A673 (cell line): ENCODE measurements at regions of chr3 and their contacts with region 1.

Region 1: DNA sequence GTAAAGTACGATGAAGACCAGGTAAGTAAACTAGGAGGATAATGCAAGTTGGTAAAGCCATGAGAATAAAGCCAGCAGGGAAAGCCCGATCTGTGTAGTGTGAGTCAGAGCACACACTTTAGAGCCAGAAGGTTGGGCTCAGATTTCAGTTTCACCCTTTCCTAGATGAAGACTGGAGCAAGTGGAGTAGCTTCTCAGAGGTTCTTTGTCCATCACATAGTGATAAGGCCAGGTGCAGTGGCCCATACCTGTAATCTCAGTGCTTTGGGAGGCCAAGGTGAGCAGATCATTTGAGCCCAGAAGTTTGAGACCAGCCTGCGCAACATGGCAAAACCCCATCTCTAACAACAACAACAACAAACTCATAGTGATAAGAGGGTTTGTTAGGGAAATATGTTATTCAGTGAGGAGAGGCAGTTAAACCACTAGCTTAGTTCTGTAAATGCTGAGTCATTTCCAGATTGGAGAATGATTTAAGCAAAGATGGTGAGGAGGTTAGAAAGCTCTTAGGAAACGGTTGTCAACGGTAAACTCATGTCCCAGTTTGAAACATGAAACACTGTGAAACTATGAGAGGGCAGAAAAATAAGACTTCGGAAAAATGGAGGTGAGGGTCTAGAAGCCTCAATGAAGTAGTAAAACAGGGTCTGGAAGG is 39.0 kb downstream of the IL12A start:
- DNase-seq: no peak
- H3K4me3 ChIP-seq: no peak overlapping the region
- H3K27ac ChIP-seq: no peak overlapping the region
- H3K4me1 ChIP-seq: no peaks in the 10 kb centered on the region
- H3K27me3 ChIP-seq: no peaks in the 10 kb centered on the region
- CTCF ChIP-seq: no peak

Region 2: GRCh38 chr3:160163229-160163878 is 135.7 kb after region 1 on chr3:
- CTCF ChIA-PET with region 1: interaction called, 6 read pairs
- POLR2A ChIA-PET with region 1: no interaction called
- intact Hi-C with region 1: loop called (anchors 5 kb)
- DNase-seq: peak; percentile 48
- H3K4me3 ChIP-seq: no peak overlapping the region
- H3K27ac ChIP-seq: no peak overlapping the region
- H3K4me1 ChIP-seq: no peaks in the 10 kb centered on the region
- H3K27me3 ChIP-seq: peaks cover 4% of the 10 kb centered on the region
- CTCF ChIP-seq: peak; percentile 64

Region 3: DNA sequence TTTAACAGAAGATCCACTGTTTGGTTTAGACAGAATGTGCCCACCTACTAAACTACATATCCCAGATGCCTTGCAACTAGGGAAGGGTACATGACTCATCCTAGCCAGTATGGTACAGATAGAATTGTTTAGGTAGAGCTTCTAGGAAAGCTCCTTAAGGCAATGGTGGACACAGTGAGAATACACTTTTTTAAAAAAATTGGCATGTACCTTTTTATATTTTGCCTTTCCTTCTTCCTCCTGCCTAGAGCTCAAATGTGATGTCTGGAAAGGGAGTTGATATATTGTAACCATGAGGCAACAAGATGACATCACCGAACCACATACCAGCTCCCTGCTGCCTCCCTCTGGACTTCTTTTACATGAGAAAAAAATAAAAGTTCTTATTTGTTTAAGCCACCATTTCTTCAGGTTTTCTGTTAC is 183.1 kb after region 1 on chr3:
- CTCF ChIA-PET with region 1: interaction called, 9 read pairs
- POLR2A ChIA-PET with region 1: no interaction called
- intact Hi-C with region 1: loop called (anchors 2 kb)
- DNase-seq: peak; percentile 72
- H3K4me3 ChIP-seq: no peak overlapping the region
- H3K27ac ChIP-seq: no peak overlapping the region
- H3K4me1 ChIP-seq: peaks cover 5% of the 10 kb centered on the region
- H3K27me3 ChIP-seq: peaks cover 7% of the 10 kb centered on the region
- CTCF ChIP-seq: peak; percentile 55

Region 4: DNA sequence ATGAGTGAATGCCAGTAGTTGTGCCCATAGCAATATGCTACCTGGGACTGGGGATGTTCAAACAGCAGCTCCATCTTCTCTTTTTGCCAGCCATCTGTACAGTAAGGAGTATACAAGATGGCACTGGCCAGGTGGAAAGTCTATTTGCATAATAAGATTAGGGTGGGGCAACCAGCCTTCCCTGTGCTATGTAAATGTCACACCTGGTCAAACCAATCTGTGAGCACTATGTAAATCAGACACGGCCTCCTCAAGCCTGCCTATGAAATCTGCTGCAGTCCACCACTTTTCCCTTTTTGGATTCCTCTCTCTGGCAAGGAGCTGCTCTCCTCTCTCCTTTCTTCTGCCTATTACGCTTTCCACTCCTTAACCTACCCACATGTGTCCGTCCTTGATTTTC is 250.5 kb after region 1 on chr3:
- CTCF ChIA-PET with region 1: no interaction called
- POLR2A ChIA-PET with region 1: no interaction called
- intact Hi-C with region 1: no loop called
- DNase-seq: no peak
- H3K4me3 ChIP-seq: no peak overlapping the region
- H3K27ac ChIP-seq: no peak overlapping the region
- H3K4me1 ChIP-seq: no peaks in the 10 kb centered on the region
- H3K27me3 ChIP-seq: no peaks in the 10 kb centered on the region
- CTCF ChIP-seq: no peak

Region 5: GRCh38 chr3:160343132-160343531 is 315.5 kb after region 1 on chr3:
- CTCF ChIA-PET with region 1: no interaction called
- POLR2A ChIA-PET with region 1: no interaction called
- intact Hi-C with region 1: loop called (anchors 1 kb)
- DNase-seq: peak; percentile 48
- H3K4me3 ChIP-seq: no peak overlapping the region
- H3K27ac ChIP-seq: no peak overlapping the region
- H3K4me1 ChIP-seq: no peaks in the 10 kb centered on the region
- H3K27me3 ChIP-seq: no peaks in the 10 kb centered on the region
- CTCF ChIP-seq: peak; percentile 57

Region 6: DNA sequence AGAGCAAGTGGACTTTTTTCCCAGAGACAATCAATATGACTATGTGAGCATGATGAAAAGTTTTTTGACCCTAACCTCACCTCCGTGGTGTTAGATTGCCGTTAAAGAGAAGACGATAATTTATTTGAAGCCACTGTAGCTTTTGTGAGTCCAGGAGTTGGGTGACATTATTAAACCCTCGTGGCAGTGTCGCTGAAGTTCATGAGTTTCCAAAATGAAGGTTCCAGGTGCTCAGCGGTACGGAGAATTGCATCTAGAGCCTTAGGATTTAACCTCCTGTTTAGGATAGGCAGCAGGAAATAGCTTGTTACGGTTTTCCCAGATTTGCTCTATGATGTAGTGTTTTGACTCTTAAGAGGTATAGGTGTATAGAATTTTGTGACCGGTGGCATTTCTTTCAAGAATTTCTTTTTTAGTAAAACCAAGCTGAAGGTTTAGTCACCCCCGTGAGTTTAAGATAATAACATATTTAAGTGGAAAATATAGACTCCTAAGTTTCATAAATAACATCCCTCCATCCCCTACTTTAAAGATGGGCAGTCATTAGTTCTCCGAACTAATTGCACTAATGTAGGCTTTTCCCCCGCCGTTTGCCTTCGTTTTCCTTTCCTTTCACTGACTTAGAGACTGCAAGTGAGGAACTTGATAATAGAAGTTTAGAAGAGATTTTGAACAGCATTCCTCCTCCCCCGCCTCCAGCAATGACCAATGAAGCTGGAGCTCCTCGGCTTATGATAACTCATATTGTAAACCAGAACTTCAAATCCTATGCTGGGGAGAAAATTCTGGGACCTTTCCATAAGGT is 373.8 kb after region 1 on chr3:
- CTCF ChIA-PET with region 1: no interaction called
- POLR2A ChIA-PET with region 1: interaction called, 18 read pairs
- intact Hi-C with region 1: no loop called
- DNase-seq: peak; percentile 69
- H3K4me3 ChIP-seq: peak overlapping the region; percentile 69
- H3K27ac ChIP-seq: peak overlapping the region; percentile 96
- H3K4me1 ChIP-seq: peaks cover 19% of the 10 kb centered on the region
- H3K27me3 ChIP-seq: no peaks in the 10 kb centered on the region
- CTCF ChIP-seq: no peak

Region 7: GRCh38 chr3:160413613-160414248 is 386.1 kb after region 1 on chr3:
- CTCF ChIA-PET with region 1: interaction called, 8 read pairs
- POLR2A ChIA-PET with region 1: no interaction called
- intact Hi-C with region 1: loop called (anchors 5 kb)
- DNase-seq: peak; percentile 81
- H3K4me3 ChIP-seq: no peak overlapping the region
- H3K27ac ChIP-seq: no peak overlapping the region
- H3K4me1 ChIP-seq: no peaks in the 10 kb centered on the region
- H3K27me3 ChIP-seq: no peaks in the 10 kb centered on the region
- CTCF ChIP-seq: peak; percentile 84

Region 8: DNA sequence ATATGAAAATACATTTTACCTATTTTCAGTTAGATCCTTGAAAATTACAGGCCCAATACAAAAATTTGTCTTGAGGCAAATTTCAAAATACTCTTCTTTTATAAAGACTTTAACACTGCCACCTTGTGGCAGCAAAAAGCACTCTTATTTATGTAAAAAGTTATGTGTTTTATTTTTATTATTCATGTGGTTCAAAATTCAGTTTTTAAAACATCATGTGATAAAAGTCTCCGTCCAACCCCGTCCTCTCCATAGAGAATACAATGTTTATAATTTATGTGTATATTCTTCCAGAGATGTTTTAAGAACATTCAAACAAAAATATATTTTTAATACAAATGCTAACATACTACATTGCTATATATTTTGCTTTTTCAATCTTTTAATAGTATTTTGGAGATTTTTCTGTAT is 458.8 kb after region 1 on chr3:
- CTCF ChIA-PET with region 1: no interaction called
- POLR2A ChIA-PET with region 1: no interaction called
- intact Hi-C with region 1: loop called (anchors 5 kb)
- DNase-seq: peak; percentile 56
- H3K4me3 ChIP-seq: no peak overlapping the region
- H3K27ac ChIP-seq: no peak overlapping the region
- H3K4me1 ChIP-seq: no peaks in the 10 kb centered on the region
- H3K27me3 ChIP-seq: no peaks in the 10 kb centered on the region
- CTCF ChIP-seq: peak; percentile 74